IMR-90 (cell line): ENCODE measurements at regions of chrX and their contacts with region 1.

Region 1: GRCh38 chrX:53683556-53684414 is 2.7 kb downstream of the HUWE1 start:
- DNase-seq: peak; percentile 98
- ATAC-seq: peak; percentile 76
- H3K4me3 ChIP-seq: peak overlapping the region; percentile 88
- H3K27ac ChIP-seq: peak overlapping the region; percentile 97
- H3K4me1 ChIP-seq: no peaks in the 10 kb centered on the region
- H3K27me3 ChIP-seq: no peaks in the 10 kb centered on the region
- CTCF ChIP-seq: 0 out of 2 replicates have a peak, but pooled peaks have one; percentile 13
- POLR2A ChIP-seq: peak; percentile 94
- RAD21 ChIP-seq: no peak

Region 2: DNA sequence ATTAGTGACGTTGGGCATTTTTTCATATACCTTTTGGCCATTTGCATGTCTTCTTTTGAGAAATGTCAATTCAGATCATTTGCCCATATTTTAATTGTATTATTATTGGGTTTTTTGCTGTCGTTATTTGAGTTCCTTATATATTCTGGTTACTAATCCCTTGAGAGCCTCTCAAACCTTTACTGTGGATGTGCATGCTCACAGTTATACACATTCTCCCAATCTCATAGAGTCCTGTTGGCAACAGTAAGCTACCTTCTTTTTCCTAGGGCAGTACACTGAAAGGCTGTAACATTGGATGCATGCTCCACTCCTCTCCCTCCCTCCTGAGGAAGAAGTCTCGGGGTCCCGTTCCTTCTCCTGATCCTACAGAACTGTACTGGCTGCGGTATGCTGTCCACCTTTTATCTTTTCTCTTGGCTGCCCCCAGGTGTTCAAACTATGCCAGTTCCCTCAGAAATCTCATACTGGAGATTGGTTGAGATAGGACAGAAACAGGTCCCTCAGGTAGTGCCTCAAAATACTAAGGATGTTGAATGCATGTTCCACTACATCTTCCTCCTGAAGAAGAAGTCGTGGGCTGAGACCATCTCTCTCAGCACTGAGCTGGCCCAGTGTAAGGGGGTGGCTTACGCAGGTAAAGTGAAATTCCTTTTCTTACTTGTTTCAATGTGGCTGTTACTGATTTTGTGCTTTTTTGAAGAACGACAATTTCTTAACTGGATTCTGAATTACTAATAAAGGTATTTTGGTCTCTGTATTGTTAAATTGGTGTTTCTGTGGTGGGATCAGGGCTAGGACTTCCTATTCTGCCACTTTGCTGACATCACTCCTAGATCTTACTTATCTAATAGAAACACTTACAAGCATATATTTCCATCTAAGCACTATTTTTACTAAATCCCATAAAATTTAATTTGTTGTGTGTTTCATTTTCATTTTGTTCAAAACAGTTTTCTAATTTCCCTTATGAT is 148.2 kb after region 1 on chrX:
- CTCF ChIA-PET with region 1: no interaction called
- POLR2A ChIA-PET with region 1: no interaction called
- dilution Hi-C with region 1: no loop called
- in situ Hi-C with region 1: no loop called
- intact Hi-C with region 1: loop called (anchors 5 kb)
- DNase-seq: peak; percentile 7
- ATAC-seq: peak; percentile 60; the same call in 1 of the 2 replicates
- H3K4me3 ChIP-seq: no peak overlapping the region
- H3K27ac ChIP-seq: no peak overlapping the region
- H3K4me1 ChIP-seq: no peaks in the 10 kb centered on the region
- H3K27me3 ChIP-seq: no peaks in the 10 kb centered on the region
- CTCF ChIP-seq: peak; percentile 35
- POLR2A ChIP-seq: no peak
- RAD21 ChIP-seq: peak; percentile 46

Region 3: GRCh38 chrX:54049801-54050200 is 366.0 kb after region 1 on chrX:
- CTCF ChIA-PET with region 1: no interaction called
- POLR2A ChIA-PET with region 1: no interaction called
- dilution Hi-C with region 1: no loop called
- in situ Hi-C with region 1: no loop called
- intact Hi-C with region 1: no loop called
- DNase-seq: no peak
- ATAC-seq: no peak
- H3K4me3 ChIP-seq: no peak overlapping the region
- H3K27ac ChIP-seq: no peak overlapping the region
- H3K4me1 ChIP-seq: no peaks in the 10 kb centered on the region; the same call in 1 of the 2 replicates
- H3K27me3 ChIP-seq: no peaks in the 10 kb centered on the region
- CTCF ChIP-seq: no peak
- POLR2A ChIP-seq: no peak
- RAD21 ChIP-seq: no peak